GM12878 (cell line): ENCODE measurements at regions of chr1 and their contacts with region 1.

Region 1: GRCh38 chr1:237976331-237976730 is 85.6 kb upstream of the ZP4 start:
- DNase-seq: peak; percentile 13
- ATAC-seq: peak; percentile 86
- H3K4me3 ChIP-seq: no peak overlapping the region
- H3K27ac ChIP-seq: no peak overlapping the region
- H3K4me1 ChIP-seq: no peaks in the 10 kb centered on the region
- H3K27me3 ChIP-seq: no peaks in the 10 kb centered on the region
- CTCF ChIP-seq: no peak
- EP300 ChIP-seq: no peak
- POLR2A ChIP-seq: no peak
- RAD21 ChIP-seq: no peak

Region 2: GRCh38 chr1:237999426-238000052 is 23.2 kb after region 1 on chr1:
- CTCF ChIA-PET with region 1: no interaction called
- POLR2A ChIA-PET with region 1: interaction called, 3 read pairs
- RAD21 ChIA-PET with region 1: interaction called, 3 read pairs
- SMC1A ChIA-PET with region 1: interaction called, 14 read pairs
- in situ Hi-C with region 1: no loop called
- intact Hi-C with region 1: no loop called
- DNase-seq: no peak
- ATAC-seq: peak; percentile 85
- H3K4me3 ChIP-seq: no peak overlapping the region
- H3K27ac ChIP-seq: no peak overlapping the region
- H3K4me1 ChIP-seq: no peaks in the 10 kb centered on the region
- H3K27me3 ChIP-seq: no peaks in the 10 kb centered on the region
- CTCF ChIP-seq: no peak
- EP300 ChIP-seq: no peak
- POLR2A ChIP-seq: no peak
- RAD21 ChIP-seq: no peak